ENCODE measurements at regions of chr11 and their contacts with region 1.

Region 1: DNA sequence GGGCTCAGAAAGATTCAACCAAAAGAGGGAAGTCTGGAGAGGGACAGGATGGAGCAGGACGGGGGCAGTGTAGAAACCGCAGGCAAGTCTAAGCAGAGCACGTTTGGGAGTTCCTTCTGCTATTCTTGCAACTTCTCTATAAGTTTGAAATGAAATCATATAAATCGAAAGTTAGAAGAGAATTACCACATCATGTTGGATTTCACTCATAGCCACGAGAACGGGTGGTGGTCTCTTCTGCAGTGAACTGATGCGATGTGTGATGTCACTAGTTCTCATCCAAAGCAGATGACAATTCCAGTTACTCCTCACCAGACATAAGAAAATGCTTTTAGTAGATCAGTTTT is 36.0 kb downstream of the KCNQ1 start:
- DNase-seq: peak; percentile 38
- H3K4me3 Mint-ChIP-seq: peak overlapping the region; percentile 60
- H3K27ac Mint-ChIP-seq: peak overlapping the region; percentile 86
- H3K4me1 Mint-ChIP-seq: peaks cover 36% of the 10 kb centered on the region
- H3K27me3 Mint-ChIP-seq: no peaks in the 10 kb centered on the region

Region 2: GRCh38 chr11:2466869-2467698 is 13.8 kb before region 1 on chr11:
- CTCF ChIA-PET with region 1: no interaction called
- intact Hi-C with region 1: loop called (anchors 1 kb)
- DNase-seq: peak; percentile 77
- H3K4me3 Mint-ChIP-seq: peak overlapping the region; percentile 12
- H3K27ac Mint-ChIP-seq: no peak overlapping the region
- H3K4me1 Mint-ChIP-seq: peaks cover 66% of the 10 kb centered on the region
- H3K27me3 Mint-ChIP-seq: no peaks in the 10 kb centered on the region

Measured in activated naive CD4-positive, alpha-beta T cell treated with anti-CD3 and anti-CD28 coated beads for 36 hours (primary cell).